Activated CD8-positive, alpha-beta memory T cell treated with anti-CD3 and anti-CD28 coated beads, Interleukin-2, amount 10 ng/mL, durations not matched to agents 7 days and 5 days (primary cell): ENCODE measurements at regions of chr15 and their contacts with region 1.

Region 1: DNA sequence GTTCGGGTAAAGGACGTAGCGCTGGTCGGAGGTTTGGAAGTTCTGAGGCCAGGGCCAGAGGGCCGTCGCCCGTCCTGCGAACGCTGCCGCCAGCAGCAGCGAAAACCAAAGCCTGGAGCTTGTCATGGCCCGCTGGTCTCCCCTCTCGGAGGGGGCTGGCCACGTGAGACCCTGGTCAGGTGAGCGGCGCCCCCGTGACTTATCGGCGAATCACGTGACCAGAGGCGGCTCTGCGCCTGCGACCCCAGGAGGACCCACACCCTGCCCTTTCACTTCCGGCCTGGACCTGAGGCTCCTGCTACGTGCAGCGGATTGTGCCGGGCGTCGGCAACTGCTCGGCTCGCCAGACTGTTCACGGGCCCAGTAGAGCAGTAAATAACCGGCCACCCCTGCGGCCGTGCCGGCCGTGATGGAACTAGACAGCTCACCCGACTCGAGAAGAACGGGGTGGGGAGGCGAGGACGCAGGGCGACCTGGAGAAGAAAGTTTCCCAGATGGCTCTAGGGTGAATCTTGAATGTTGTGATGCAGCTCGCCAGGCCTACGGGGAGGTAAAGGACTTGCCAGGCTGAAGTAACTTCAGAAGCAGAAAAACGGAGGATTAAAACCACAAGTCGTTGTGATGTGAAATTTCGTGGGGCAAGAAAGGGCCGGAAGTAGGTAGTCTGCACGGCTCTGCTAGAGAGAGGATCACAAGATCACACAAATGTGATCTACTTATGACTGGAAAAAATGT is at the start of gene HEXA:
- DNase-seq: peak; percentile 99
- ATAC-seq: peak; percentile 88
- H3K4me3 Mint-ChIP-seq: peak within 1 kb of the TSS; percentile 92
- H3K27ac Mint-ChIP-seq: peak within 1 kb of the TSS; percentile 96
- H3K4me1 Mint-ChIP-seq: peaks cover 45% of the 10 kb centered on the region
- H3K27me3 Mint-ChIP-seq: no peaks in the 10 kb centered on the region
- total RNA-seq, gene HEXA: 92.1 to 95.5 TPM

Region 2: GRCh38 chr15:72365844-72366243 is 10.2 kb before region 1 on chr15:
- CTCF ChIA-PET with region 1: interaction called, 11 read pairs
- DNase-seq: peak; percentile 84
- ATAC-seq: peak; percentile 93
- H3K4me3 Mint-ChIP-seq: peak overlapping the region; percentile 9
- H3K27ac Mint-ChIP-seq: peak overlapping the region; percentile 61
- H3K4me1 Mint-ChIP-seq: peaks cover 34% of the 10 kb centered on the region
- H3K27me3 Mint-ChIP-seq: no peaks in the 10 kb centered on the region

Region 3: DNA sequence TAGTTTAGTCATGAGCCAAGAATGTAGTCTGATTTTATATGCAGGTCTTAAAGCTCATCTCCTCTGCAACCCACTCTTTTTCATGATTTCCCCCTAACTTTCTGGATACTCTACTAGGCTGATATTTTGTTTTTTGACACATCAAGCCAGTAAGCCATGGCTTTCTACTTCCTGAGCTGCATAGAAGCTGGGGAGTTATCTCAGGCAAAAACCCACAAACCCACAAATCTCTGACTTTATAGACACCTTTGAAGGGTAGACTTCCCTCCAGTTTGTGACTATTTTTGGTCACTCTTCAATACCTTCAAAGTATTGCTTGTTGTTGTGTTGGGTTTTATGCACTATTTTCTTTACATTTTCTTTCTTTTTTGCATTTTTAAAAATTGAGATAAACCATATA is 50.7 kb after region 1 on chr15:
- CTCF ChIA-PET with region 1: no interaction called
- DNase-seq: no peak
- ATAC-seq: no peak
- H3K4me3 Mint-ChIP-seq: no peak overlapping the region
- H3K27ac Mint-ChIP-seq: no peak overlapping the region
- H3K4me1 Mint-ChIP-seq: peaks cover 1% of the 10 kb centered on the region
- H3K27me3 Mint-ChIP-seq: peaks cover 27% of the 10 kb centered on the region